Sciatic nerve (tissue), 2 donors: ENCODE measurements at regions of chr11 and their contacts with region 1.

Region 1: DNA sequence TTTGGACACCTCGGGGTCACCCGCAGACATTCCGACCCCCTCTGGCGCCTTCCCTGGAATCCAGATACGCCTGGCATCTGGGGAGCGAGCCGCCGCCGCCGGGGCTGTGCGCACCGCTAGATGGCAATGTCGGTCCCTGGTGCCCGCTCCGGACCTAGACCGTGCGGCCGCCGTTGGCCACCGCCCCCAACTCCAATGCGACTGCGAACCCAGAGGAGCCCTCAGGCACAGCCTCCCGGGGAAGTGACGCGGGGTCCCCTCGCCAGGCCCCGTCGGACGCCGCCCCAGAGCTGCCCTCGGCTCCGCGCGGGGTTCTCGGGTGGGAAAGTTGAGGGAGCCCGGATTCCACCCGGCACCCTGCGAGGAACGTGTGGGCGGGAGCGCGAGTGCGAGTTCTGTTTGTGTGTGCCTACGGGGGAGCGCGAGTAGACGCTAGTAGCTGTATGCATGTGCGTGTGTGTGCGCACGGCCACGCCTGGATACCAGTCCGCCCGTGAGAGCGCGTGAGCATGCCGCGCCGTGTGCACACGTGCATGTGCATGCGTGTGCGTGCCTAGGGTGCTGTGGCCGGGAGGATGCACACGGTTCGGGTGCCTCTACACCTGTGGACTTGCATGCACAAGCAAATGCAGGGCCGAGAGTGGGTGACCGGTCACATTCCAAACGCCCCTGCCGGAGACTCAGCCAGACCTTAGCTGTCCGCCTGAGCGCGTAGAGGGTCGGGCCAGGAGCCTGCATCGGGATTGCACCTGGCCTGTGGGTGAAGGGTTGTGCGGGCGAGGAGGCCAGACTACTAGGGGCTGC is 1.9 kb downstream of the CHRM4 start:
- DNase-seq: peak; percentile 86
- ATAC-seq: peak; percentile 80

Region 2: GRCh38 chr11:46346886-46347636 is 42.6 kb before region 1 on chr11 and contains the start of gene DGKZ:
- intact Hi-C with region 1: no loop called
- DNase-seq: peak; percentile 89
- ATAC-seq: peak; percentile 90
- total RNA-seq, gene DGKZ: 45.5 TPM

Region 3: DNA sequence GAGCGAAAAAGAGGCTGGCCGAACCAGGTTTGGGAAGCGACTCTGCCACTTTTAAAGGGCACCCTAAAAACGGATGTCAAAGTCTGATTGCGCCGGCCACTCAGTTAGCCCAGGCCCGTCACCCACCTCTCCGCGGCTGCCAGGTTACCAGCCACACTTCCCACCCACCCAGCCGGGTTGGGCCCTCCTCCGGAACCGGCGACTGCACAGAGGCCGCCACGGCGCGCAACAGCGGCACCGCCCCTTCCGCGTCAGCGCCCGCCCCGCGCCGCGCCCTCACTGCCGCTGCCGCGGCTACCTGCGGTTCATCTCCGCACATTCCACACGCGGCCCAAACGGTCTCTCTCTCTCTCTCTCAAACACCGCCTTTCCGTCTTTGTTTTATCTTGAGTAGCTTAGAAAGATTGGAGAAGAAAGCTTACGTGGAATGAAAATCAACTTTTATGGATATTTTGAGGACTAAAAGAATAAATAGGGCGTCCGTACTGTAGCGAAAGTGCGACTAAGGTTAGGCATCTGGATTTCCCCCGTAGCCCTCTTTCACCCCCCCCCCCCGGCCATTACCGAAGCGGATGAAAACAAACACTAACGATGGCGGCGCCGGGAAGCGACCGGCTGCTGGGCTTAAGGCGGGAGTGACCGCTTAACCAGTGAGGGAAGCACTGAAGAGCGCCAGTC is 227.5 kb after region 1 on chr11 and contains the starts of genes ATG13 and HARBI1:
- intact Hi-C with region 1: loop called (anchors 10 kb)
- DNase-seq: peak; percentile 92
- ATAC-seq: peak; percentile 98
- total RNA-seq, gene ATG13: 55.1 TPM
- total RNA-seq, gene HARBI1: 4.3 TPM